Dendritic cell treated with granulocyte-macrophage colony-stimulating factor and Interleukin-4, amounts not matched to agents 40 ng/mL and 50 ng/mL, for 4 days (primary cell): ENCODE measurements at regions of chr6 and their contacts with region 1.

Region 1: GRCh38 chr6:34986845-34987246 is 97.8 kb downstream of the ANKS1A start:
- H3K4me3 Mint-ChIP-seq: no peak overlapping the region
- H3K27ac Mint-ChIP-seq: no peak overlapping the region
- H3K4me1 Mint-ChIP-seq: peaks cover 5% of the 10 kb centered on the region
- H3K27me3 Mint-ChIP-seq: no peaks in the 10 kb centered on the region

Region 2: GRCh38 chr6:35139908-35140655 is 153.2 kb after region 1 on chr6:
- intact Hi-C with region 1: loop called (anchors 1 kb)
- H3K4me3 Mint-ChIP-seq: peak overlapping the region; percentile 56
- H3K27ac Mint-ChIP-seq: peak overlapping the region; percentile 75
- H3K4me1 Mint-ChIP-seq: peaks cover 38% of the 10 kb centered on the region
- H3K27me3 Mint-ChIP-seq: peaks cover 12% of the 10 kb centered on the region

Region 3: GRCh38 chr6:35202066-35202546 is 215.3 kb after region 1 on chr6:
- intact Hi-C with region 1: loop called (anchors 1 kb)
- H3K4me3 Mint-ChIP-seq: no peak overlapping the region
- H3K27ac Mint-ChIP-seq: no peak overlapping the region
- H3K4me1 Mint-ChIP-seq: no peaks in the 10 kb centered on the region
- H3K27me3 Mint-ChIP-seq: peaks cover 38% of the 10 kb centered on the region

Region 4: DNA sequence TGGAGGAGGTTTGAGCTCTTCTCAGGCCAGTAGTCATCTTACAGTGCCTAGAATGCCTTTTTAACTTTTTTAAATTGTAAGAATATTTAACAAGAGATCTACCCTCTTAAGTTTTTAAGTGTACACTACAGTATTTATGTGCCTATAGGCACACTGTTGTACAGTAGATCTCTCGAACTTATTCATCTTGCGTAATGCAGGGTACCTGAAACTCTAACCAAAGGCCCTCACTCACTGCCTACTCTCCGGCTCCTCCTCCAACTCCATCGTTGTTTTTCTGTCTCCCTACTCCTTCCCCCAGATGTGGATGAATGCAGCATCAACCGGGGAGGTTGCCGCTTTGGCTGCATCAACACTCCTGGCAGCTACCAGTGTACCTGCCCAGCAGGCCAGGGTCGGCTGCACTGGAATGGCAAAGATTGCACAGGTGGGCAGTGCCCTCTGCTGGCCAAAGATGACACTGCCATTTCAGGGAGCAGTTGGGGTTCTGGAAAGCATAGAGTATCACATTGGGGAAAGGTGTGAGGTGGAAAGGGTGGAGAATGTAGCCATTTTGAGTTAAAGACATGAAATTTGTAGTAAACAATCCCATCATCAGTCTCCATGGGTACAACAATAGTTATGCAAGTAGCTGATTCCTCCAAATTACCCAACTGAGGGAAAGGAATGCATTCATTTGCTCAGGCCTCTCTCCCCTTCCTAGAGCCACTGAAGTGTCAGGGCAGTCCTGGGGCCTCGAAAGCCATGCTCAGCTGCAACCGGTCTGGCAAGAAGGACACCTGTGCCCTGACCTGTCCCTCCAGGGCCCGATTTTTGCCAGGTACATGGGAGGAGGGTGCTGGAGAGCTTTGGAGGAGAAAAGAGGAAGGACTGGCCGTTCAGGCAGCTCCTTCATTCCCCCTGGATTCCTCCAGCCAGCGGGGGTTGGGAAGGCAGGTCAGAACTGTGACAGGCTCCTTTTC is 254.3 kb after region 1 on chr6:
- intact Hi-C with region 1: loop called (anchors 2 kb)
- H3K4me3 Mint-ChIP-seq: no peak overlapping the region
- H3K27ac Mint-ChIP-seq: no peak overlapping the region
- H3K4me1 Mint-ChIP-seq: peaks cover 28% of the 10 kb centered on the region
- H3K27me3 Mint-ChIP-seq: no peaks in the 10 kb centered on the region